K562 (cell line): ENCODE measurements at regions of chr22 and their contacts with region 1.

Region 1: GRCh38 chr22:22810018-22810427 is 77.6 kb upstream of the IGLL5 start:
- DNase-seq: peak; percentile 97 to 100 (median 98)
- ATAC-seq: peak; percentile 96
- H3K4me3 ChIP-seq: no peak overlapping the region
- H3K27ac ChIP-seq: no peak overlapping the region
- H3K4me1 ChIP-seq: peaks cover 0 to 4% of the 10 kb centered on the region in 2 experiments; a peak in 1 of 5 replicates
- H3K27me3 ChIP-seq: peaks cover 8 to 19% of the 10 kb centered on the region in 2 experiments; a peak in 3 of 5 replicates
- CTCF ChIP-seq: no peak
- EP300 ChIP-seq: no peak
- POLR2A ChIP-seq: no peak
- RAD21 ChIP-seq: no peak

Region 2: DNA sequence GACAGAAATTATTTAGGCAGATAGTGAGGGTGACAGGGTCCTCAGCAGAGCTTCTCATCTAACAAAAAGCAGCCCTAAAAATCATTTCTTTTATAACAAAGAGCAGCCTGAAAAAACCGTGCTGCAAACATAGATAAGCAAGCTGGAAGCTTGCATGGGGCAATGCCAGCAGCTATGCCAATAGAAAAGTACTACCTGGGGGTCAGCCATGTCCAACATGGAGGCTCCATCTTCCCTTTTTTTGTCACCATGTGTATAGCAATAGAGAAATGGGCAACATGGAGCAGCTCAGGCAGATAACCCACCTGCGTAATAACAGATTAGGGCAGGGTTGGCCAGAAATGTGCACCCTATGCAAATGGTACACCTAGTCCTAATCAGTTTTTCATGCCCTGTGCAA is 20.2 kb after region 1 on chr22:
- CTCF ChIA-PET with region 1: no interaction called
- POLR2A ChIA-PET with region 1: interaction called, 41 read pairs
- in situ Hi-C with region 1: no loop called
- intact Hi-C with region 1: no loop called
- DNase-seq: no peak
- ATAC-seq: no peak
- H3K4me3 ChIP-seq: no peak overlapping the region
- H3K27ac ChIP-seq: no peak overlapping the region
- H3K4me1 ChIP-seq: no peaks in the 10 kb centered on the region
- H3K27me3 ChIP-seq: peaks cover 21 to 36% of the 10 kb centered on the region in 2 experiments
- CTCF ChIP-seq: no peak
- EP300 ChIP-seq: no peak
- POLR2A ChIP-seq: no peak
- RAD21 ChIP-seq: no peak

Region 3: DNA sequence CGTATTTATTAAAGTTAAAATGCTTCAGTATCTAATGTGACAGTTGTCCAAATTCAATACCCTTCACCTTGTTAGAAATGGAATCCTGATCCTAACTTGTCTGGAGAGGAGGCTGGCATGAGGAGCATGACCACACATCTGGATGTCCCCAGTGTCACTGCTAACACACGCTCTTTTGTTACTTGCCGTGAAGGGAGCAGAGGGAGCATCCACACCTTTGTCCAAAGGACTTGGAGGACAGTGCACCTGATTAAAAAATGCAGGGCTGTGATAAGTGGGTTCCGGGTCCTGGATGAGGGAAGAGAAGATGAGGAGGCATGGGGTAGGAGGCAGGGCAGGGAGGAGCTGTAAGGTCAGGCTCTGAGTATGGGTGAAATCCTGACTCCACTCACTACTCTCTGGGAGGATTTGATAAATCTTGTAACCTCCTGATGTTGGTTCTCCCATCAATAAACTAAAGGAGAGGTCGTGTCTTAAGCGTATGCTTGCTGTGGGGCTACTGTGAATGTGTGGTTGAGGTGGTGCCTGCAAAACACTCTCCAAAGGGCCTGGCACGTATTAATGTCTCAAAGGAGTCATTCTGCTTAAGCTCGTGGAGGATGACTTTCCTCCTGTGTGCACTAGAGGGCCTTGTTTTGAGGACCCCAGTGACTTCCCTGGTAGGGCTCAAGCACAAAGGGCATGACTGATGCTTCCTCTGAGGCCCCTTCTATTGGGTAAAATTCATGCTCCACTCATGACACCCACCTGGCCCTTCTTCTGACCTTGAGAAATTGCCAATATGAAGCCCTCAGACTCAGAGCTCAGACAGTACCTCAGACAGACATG is 60.8 kb after region 1 on chr22:
- CTCF ChIA-PET with region 1: interaction called, 19 read pairs
- POLR2A ChIA-PET with region 1: interaction called, 5 read pairs
- in situ Hi-C with region 1: no loop called
- intact Hi-C with region 1: no loop called
- DNase-seq: peak; percentile 53 to 84 (median 70)
- ATAC-seq: peak; percentile 82
- H3K4me3 ChIP-seq: no peak overlapping the region
- H3K27ac ChIP-seq: no peak overlapping the region
- H3K4me1 ChIP-seq: no peaks in the 10 kb centered on the region
- H3K27me3 ChIP-seq: peaks cover 0 to 45% of the 10 kb centered on the region in 2 experiments; a peak in 3 of 5 replicates
- CTCF ChIP-seq: no peak
- EP300 ChIP-seq: no peak
- POLR2A ChIP-seq: no peak
- RAD21 ChIP-seq: no peak